Activated CD8-positive, alpha-beta memory T cell treated with anti-CD3 and anti-CD28 coated beads, Interleukin-2, amount 10 ng/mL, durations not matched to agents 7 days and 5 days (primary cell): ENCODE measurements at regions of chr13 and their contacts with region 1.

Region 1: GRCh38 chr13:40069173-40070044 is 413.9 kb downstream of the COG6 start:
- DNase-seq: peak; percentile 76
- ATAC-seq: peak; percentile 87
- H3K4me3 Mint-ChIP-seq: no peak overlapping the region
- H3K27ac Mint-ChIP-seq: no peak overlapping the region
- H3K4me1 Mint-ChIP-seq: peaks cover 12% of the 10 kb centered on the region
- H3K27me3 Mint-ChIP-seq: no peaks in the 10 kb centered on the region

Region 2: GRCh38 chr13:40087091-40088002 is 17.9 kb after region 1 on chr13:
- CTCF ChIA-PET with region 1: interaction called, 14 read pairs
- DNase-seq: no peak
- ATAC-seq: no peak
- H3K4me3 Mint-ChIP-seq: no peak overlapping the region
- H3K27ac Mint-ChIP-seq: no peak overlapping the region
- H3K4me1 Mint-ChIP-seq: no peaks in the 10 kb centered on the region
- H3K27me3 Mint-ChIP-seq: no peaks in the 10 kb centered on the region